Caco-2 (cell line): ENCODE measurements at regions of chr14 and their contacts with region 1.

Region 1: DNA sequence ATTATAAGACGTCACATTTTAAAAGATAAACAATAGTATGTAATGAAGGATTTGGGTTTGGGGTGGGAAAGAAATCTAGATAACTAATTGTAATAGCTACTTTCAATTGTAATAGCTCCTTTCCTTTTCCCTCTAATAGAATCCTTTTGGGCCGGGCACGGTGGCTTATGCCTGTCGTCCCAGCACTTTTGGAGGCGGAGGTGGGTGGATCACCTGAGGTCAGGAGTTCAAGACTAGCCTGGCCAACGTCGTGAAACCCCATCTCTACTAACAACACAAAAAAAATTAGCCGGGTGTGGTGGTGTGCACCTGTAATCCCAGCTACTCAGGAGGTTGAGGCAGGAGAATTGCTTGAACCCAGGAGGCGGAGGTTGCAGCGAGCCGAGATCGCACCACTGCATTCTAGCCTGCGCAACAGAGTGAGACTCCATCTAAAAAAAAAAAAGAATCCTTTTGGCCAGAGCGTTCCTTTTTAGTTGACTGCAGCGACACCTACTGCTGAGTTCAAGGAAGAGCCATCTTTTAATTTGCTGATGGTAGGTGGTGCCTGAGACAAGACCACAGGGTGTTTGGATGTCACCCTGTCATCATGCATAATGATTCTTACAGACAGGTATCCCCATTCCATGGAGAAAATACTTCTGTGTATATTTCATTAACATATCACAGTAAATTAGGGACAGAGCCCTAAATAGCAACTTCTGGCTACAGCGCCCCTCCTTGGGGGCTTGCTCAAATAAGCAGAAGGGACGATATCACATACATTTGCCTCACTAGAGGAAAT is 79.5 kb downstream of the ARMH4 start:
- DNase-seq: peak; percentile 59 to 68
- H3K4me3 ChIP-seq: no peak overlapping the region
- H3K4me3 Mint-ChIP-seq: no peak overlapping the region
- H3K27ac Mint-ChIP-seq: no peak overlapping the region
- H3K4me1 ChIP-seq: no peaks in the 10 kb centered on the region
- H3K4me1 Mint-ChIP-seq: no peaks in the 10 kb centered on the region
- H3K27me3 ChIP-seq: no peaks in the 10 kb centered on the region
- H3K27me3 Mint-ChIP-seq: peaks cover 9% of the 10 kb centered on the region
- CTCF ChIP-seq: peak; percentile 64 to 74

Region 2: DNA sequence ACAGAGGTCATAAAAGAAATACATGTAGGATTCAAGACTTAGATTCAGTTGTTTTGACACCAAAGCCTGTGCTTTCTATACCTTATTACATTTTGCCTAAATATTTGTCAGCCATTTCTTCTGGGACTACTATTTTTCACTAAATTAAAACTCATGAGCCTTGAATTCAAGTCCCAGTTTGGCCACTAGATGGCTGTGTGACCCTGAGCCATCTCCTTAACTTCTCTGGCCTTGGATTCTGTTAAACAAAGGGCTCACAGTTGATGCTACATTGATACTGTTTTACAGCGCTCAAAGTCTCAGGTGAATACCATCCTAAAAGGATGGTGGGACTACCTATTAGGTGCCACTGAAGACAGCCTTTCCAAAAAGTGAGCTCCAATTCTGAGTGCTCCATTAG is 539.3 kb before region 1 on chr14:
- CTCF ChIA-PET with region 1: no interaction called
- POLR2A ChIA-PET with region 1: no interaction called
- intact Hi-C with region 1: loop called (anchors 1 kb)
- DNase-seq: peak in 1 of 2 experiments; percentile 35
- H3K4me3 ChIP-seq: no peak overlapping the region
- H3K4me3 Mint-ChIP-seq: no peak overlapping the region
- H3K27ac Mint-ChIP-seq: no peak overlapping the region
- H3K4me1 ChIP-seq: no peaks in the 10 kb centered on the region
- H3K4me1 Mint-ChIP-seq: no peaks in the 10 kb centered on the region
- H3K27me3 ChIP-seq: no peaks in the 10 kb centered on the region
- H3K27me3 Mint-ChIP-seq: peaks cover 4% of the 10 kb centered on the region
- CTCF ChIP-seq: peak in 1 of 2 experiments; percentile 26

Region 3: DNA sequence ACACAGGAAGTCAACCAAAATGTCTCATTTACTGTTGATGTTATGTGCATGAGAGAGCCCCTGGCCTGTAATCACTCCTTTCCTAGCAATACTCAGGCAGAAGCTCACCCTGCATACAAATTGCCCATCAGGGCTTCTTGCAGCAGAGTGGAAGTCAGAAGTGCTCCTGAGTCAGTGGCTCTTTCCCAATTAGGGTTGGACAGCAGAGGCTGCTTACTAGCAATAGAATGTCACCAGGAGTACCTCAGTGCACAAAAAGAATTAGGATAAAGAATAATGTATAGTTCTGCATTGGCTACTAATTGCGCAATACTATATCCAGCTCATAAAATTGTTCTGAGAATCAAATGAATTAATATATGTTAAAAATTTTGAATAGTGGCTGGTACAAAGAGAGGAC is 367.7 kb before region 1 on chr14:
- CTCF ChIA-PET with region 1: no interaction called
- POLR2A ChIA-PET with region 1: no interaction called
- intact Hi-C with region 1: loop called (anchors 5 kb)
- DNase-seq: no peak
- H3K4me3 ChIP-seq: no peak overlapping the region
- H3K4me3 Mint-ChIP-seq: no peak overlapping the region
- H3K27ac Mint-ChIP-seq: no peak overlapping the region
- H3K4me1 ChIP-seq: no peaks in the 10 kb centered on the region
- H3K4me1 Mint-ChIP-seq: no peaks in the 10 kb centered on the region
- H3K27me3 ChIP-seq: no peaks in the 10 kb centered on the region
- H3K27me3 Mint-ChIP-seq: no peaks in the 10 kb centered on the region
- CTCF ChIP-seq: no peak

Region 4: GRCh38 chr14:57871459-57872080 is 200.9 kb before region 1 on chr14:
- CTCF ChIA-PET with region 1: no interaction called
- POLR2A ChIA-PET with region 1: no interaction called
- intact Hi-C with region 1: loop called (anchors 1 kb)
- DNase-seq: peak in 1 of 2 experiments; percentile 37
- H3K4me3 ChIP-seq: no peak overlapping the region
- H3K4me3 Mint-ChIP-seq: no peak overlapping the region
- H3K27ac Mint-ChIP-seq: no peak overlapping the region
- H3K4me1 ChIP-seq: no peaks in the 10 kb centered on the region
- H3K4me1 Mint-ChIP-seq: peaks cover 7% of the 10 kb centered on the region
- H3K27me3 ChIP-seq: no peaks in the 10 kb centered on the region
- H3K27me3 Mint-ChIP-seq: peaks cover 11% of the 10 kb centered on the region
- CTCF ChIP-seq: peak; percentile 44 to 62

Region 5: DNA sequence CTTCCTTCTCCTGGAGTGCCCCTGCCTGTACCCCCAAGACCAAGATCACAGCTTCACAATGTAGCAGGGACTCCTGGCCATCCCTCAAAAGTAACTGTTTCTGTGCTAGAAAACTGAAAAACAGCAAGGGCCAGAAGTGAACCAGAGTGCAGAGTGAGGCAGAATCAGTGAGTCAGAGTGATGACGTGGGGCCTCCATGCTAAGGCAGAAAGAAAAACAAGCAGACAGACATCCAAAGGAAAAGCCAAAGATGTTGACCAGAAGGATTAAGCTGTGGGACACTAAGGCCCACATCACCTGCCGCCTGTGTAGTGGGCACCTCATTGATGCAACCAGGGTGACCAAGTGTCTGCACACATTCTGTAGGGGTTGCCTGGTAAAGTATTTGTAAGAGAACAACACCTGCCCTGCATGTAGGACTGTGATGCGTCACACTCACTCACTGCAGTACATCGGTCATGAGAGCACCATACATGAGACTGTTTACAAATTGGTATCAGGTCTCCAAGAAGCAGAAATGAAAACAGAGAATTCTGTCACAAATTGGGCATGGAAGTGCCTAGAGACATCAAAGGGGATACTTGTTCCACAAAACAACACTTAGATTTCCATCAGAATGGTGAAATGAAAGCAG is 28.4 kb after region 1 on chr14:
- CTCF ChIA-PET with region 1: no interaction called
- POLR2A ChIA-PET with region 1: no interaction called
- intact Hi-C with region 1: no loop called
- DNase-seq: no peak
- H3K4me3 ChIP-seq: no peak overlapping the region
- H3K4me3 Mint-ChIP-seq: no peak overlapping the region
- H3K27ac Mint-ChIP-seq: no peak overlapping the region
- H3K4me1 ChIP-seq: no peaks in the 10 kb centered on the region
- H3K4me1 Mint-ChIP-seq: no peaks in the 10 kb centered on the region
- H3K27me3 ChIP-seq: no peaks in the 10 kb centered on the region
- H3K27me3 Mint-ChIP-seq: peaks cover 4% of the 10 kb centered on the region
- CTCF ChIP-seq: no peak

Region 6: GRCh38 chr14:58390830-58391229 is 318.4 kb after region 1 on chr14:
- CTCF ChIA-PET with region 1: no interaction called
- POLR2A ChIA-PET with region 1: no interaction called
- intact Hi-C with region 1: no loop called
- DNase-seq: no peak
- H3K4me3 ChIP-seq: no peak overlapping the region
- H3K4me3 Mint-ChIP-seq: no peak overlapping the region
- H3K27ac Mint-ChIP-seq: no peak overlapping the region
- H3K4me1 ChIP-seq: peaks cover 11% of the 10 kb centered on the region
- H3K4me1 Mint-ChIP-seq: no peaks in the 10 kb centered on the region
- H3K27me3 ChIP-seq: no peaks in the 10 kb centered on the region
- H3K27me3 Mint-ChIP-seq: no peaks in the 10 kb centered on the region
- CTCF ChIP-seq: no peak